ENCODE measurements at regions of chr15 and their contacts with region 1.

Region 1: GRCh38 chr15:89129123-89129815 is 41.0 kb downstream of the ABHD2 start:
- DNase-seq: no peak
- H3K4me3 ChIP-seq: no peak overlapping the region
- H3K27ac ChIP-seq: peak overlapping the region; percentile 10 to 59 (median 26)
- H3K4me1 ChIP-seq: peaks cover 0 to 42% (median 21%) of the 10 kb centered on the region in 4 donors
- H3K27me3 ChIP-seq: no peaks in the 10 kb centered on the region
- CTCF ChIP-seq: peak; percentile 38 to 66 (median 62)
- EP300 ChIP-seq: no peak
- POLR2A ChIP-seq: no peak

Region 2: DNA sequence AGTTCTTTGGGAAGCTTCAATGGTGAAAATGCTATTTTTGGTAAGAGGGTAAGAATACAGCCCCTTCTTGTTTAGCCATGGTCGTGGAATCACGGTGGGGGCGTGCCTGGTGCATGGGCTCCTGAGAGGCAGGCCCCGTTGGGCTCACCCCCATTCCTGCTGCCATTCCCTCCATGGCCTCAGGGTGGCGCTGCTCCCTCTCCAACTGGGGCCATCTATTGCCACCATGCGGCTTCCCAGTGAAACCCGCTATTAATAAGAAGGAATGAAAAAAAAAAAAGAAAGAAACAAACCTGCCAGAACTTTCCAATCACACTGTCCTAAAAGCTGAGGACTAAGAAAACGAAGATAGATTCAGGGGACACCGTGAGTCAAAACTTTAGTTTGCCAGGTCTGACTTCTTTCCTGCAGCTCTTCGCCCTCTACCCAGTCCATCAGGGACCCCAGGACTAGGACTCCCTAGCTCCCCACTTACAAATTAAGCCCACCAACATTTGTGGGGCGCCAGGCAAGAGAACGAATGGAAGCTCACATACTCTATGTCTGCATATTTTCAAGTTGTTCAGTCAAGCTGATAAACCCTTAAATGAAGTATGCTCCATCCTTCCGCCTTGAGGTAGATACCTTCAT is 71.7 kb before region 1 on chr15:
- intact Hi-C with region 1: loop called (anchors 2 kb)
- DNase-seq: peak; percentile 91
- H3K4me3 ChIP-seq: no peak overlapping the region
- H3K27ac ChIP-seq: no peak overlapping the region
- H3K4me1 ChIP-seq: peaks cover 0 to 8% (median 4%) of the 10 kb centered on the region in 4 donors
- H3K27me3 ChIP-seq: no peaks in the 10 kb centered on the region
- CTCF ChIP-seq: peak; percentile 94 to 99 (median 97)
- EP300 ChIP-seq: no peak
- POLR2A ChIP-seq: no peak

Region 3: GRCh38 chr15:89101302-89102191 is 27.7 kb before region 1 on chr15:
- intact Hi-C with region 1: no loop called
- DNase-seq: peak; percentile 93
- H3K4me3 ChIP-seq: no peak overlapping the region
- H3K27ac ChIP-seq: peak overlapping the region; percentile 77 to 97 (median 89)
- H3K4me1 ChIP-seq: peaks cover 0 to 100% (median 96%) of the 10 kb centered on the region in 4 donors
- H3K27me3 ChIP-seq: no peaks in the 10 kb centered on the region
- CTCF ChIP-seq: no peak
- EP300 ChIP-seq: peak in 2 of 4 donors; percentile 82 to 96
- POLR2A ChIP-seq: no peak

Region 4: DNA sequence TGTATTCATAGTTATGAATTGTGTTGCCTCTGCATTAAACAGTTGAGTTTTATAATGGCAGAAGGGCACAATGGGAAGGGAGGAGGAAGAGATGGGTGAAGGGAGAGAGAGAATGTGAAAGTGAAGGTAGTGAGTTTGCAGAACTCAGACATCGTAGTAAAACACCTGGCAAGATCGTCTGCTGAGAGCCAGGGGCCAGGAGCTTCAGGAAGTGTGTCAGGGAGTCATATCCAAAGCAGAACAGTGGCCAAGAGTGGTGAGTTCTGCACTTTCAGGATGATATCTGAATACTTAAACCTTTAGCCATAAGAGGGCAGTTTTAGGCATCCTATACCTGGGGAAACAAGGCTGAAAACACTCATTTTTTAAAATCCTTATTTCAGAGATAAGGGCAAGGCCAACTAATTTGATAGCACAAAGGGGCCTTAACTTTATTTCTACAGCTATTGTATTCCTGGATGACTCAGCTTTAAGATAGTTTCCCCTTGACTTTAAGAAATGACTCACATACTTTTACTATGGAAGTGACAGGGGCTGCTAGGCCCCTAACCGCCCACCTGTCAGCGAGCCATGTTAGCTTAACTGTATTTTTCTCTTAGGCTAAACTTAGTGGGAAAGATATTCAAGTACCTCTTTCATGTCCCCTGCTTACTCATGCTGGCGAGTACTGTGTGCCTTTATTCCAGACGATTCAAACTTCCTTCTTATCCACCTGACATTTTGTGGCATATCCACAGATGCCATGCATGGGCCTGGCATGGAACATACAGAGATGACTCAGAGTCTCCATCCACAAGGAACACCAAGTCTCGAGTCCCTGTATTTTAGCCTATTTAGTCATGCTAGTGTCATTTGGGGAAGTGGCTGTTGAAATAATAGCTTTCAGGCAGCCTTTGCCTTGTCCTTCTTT is 38.3 kb after region 1 on chr15:
- intact Hi-C with region 1: loop called (anchors 5 kb)
- DNase-seq: no peak
- H3K4me3 ChIP-seq: no peak overlapping the region
- H3K27ac ChIP-seq: peak overlapping the region; percentile 11 to 65 (median 32)
- H3K4me1 ChIP-seq: peaks cover 0 to 48% (median 40%) of the 10 kb centered on the region in 4 donors
- H3K27me3 ChIP-seq: no peaks in the 10 kb centered on the region
- CTCF ChIP-seq: no peak
- EP300 ChIP-seq: peak in 1 of 4 donors; percentile 38
- POLR2A ChIP-seq: no peak